HepG2 (cell line): ENCODE measurements at regions of chr16 and their contacts with region 1.

Region 1: GRCh38 chr16:52547004-52547833 is at the start of gene TOX3:
- DNase-seq: no peak
- ATAC-seq: peak; percentile 34
- H3K4me3 ChIP-seq: peak within 1 kb of the TSS; percentile 91 to 96 (median 92)
- H3K27ac ChIP-seq: peak within 1 kb of the TSS; percentile 67
- H3K4me1 ChIP-seq: peaks cover 32% of the 10 kb centered on the region
- H3K27me3 ChIP-seq: no peaks in the 10 kb centered on the region; a peak in 1 of 5 replicates
- CTCF ChIP-seq: no peak
- EP300 ChIP-seq: 0 out of 4 replicates have a peak, but pooled peaks of 1 of the 2 experiments have one; percentile 9
- POLR2A ChIP-seq: peak in 1 of 2 experiments; percentile 60; a peak in 1 of 4 replicates
- RAD21 ChIP-seq: no peak
- total RNA-seq, gene TOX3: 12.1 and 14.5 TPM in 2 replicates

Region 2: GRCh38 chr16:52191531-52192134 is 355.6 kb before region 1 on chr16:
- CTCF ChIA-PET with region 1: no interaction called
- POLR2A ChIA-PET with region 1: interaction called, 5 read pairs
- in situ Hi-C with region 1: loop called (anchors 10 kb)
- intact Hi-C with region 1: loop called (anchors 2 kb)
- DNase-seq: peak; percentile 76
- ATAC-seq: peak; percentile 74
- H3K4me3 ChIP-seq: no peak overlapping the region
- H3K27ac ChIP-seq: no peak overlapping the region
- H3K4me1 ChIP-seq: peaks cover 9% of the 10 kb centered on the region
- H3K27me3 ChIP-seq: no peaks in the 10 kb centered on the region
- CTCF ChIP-seq: peak; percentile 97
- EP300 ChIP-seq: no peak
- POLR2A ChIP-seq: no peak
- RAD21 ChIP-seq: peak; percentile 90

Region 3: GRCh38 chr16:52439171-52439701 is 108.0 kb before region 1 on chr16:
- CTCF ChIA-PET with region 1: no interaction called
- POLR2A ChIA-PET with region 1: no interaction called
- in situ Hi-C with region 1: no loop called
- intact Hi-C with region 1: loop called (anchors 5 kb)
- DNase-seq: no peak
- ATAC-seq: no peak; the same call in 2 of the 3 replicates
- H3K4me3 ChIP-seq: no peak overlapping the region
- H3K27ac ChIP-seq: no peak overlapping the region
- H3K4me1 ChIP-seq: peaks cover 10% of the 10 kb centered on the region
- H3K27me3 ChIP-seq: no peaks in the 10 kb centered on the region
- CTCF ChIP-seq: no peak
- EP300 ChIP-seq: no peak
- POLR2A ChIP-seq: no peak
- RAD21 ChIP-seq: no peak

Region 4: GRCh38 chr16:52497067-52497816 is 50.0 kb before region 1 on chr16:
- CTCF ChIA-PET with region 1: no interaction called
- POLR2A ChIA-PET with region 1: interaction called, 65 read pairs
- in situ Hi-C with region 1: loop called (anchors 5 kb)
- intact Hi-C with region 1: loop called (anchors 2 kb)
- DNase-seq: peak; percentile 71
- ATAC-seq: peak; percentile 67
- H3K4me3 ChIP-seq: peak overlapping the region in 2 of 3 experiments; percentile 43 to 47; a peak in 4 of 6 replicates
- H3K27ac ChIP-seq: peak overlapping the region; percentile 94
- H3K4me1 ChIP-seq: peaks cover 98% of the 10 kb centered on the region
- H3K27me3 ChIP-seq: no peaks in the 10 kb centered on the region
- CTCF ChIP-seq: no peak
- EP300 ChIP-seq: peak in 1 of 2 experiments; percentile 55; a peak in 2 of 4 replicates
- POLR2A ChIP-seq: no peak
- RAD21 ChIP-seq: no peak

Region 5: DNA sequence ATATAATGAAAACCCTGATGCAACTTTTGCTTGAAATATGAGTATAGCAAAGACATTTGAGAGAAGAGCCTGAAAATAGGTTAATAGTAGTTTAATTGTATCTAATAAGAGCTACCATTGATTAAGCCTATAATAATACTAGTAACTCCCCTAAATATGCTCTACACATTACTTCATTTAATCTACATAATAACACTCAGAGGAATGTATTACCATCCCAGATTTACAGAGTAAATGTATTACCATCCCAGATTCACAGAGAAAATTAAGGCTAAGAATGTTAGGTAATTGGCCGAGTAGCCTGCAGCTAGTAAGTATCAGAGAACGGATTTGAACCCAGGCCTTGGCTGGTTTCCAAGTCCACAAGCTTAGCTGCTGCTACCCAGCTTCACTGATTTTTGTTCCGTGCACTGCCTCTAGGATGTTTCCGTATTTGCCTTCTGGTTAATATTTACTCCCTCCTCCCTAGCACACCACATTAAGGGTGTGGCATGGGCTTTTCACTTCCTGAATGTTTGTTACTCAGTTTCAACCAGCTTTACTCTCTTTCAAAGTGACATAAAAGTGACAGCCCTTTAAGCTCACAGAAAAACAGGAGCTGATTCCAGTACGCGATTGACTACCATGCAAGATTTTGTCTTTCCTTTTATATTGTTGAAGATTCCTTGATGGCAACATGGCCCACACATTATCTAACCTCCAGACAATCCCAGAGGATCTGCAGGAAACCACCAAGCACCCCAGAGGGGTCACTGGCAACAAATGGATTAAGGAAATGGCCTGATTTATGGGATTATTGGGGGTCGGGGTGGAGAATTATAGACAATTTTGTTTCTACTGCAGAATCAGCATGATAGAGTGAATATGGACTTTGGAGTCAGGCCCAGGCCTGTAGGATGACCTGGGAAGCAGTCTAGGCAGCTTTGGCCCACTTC is 26.4 kb after region 1 on chr16:
- CTCF ChIA-PET with region 1: no interaction called
- POLR2A ChIA-PET with region 1: interaction called, 57 read pairs
- in situ Hi-C with region 1: no loop called
- intact Hi-C with region 1: loop called (anchors 2 kb)
- DNase-seq: peak; percentile 95
- ATAC-seq: peak; percentile 95
- H3K4me3 ChIP-seq: peak overlapping the region in 2 of 3 experiments; percentile 11 to 36; a peak in 4 of 6 replicates
- H3K27ac ChIP-seq: peak overlapping the region; percentile 71
- H3K4me1 ChIP-seq: peaks cover 100% of the 10 kb centered on the region
- H3K27me3 ChIP-seq: no peaks in the 10 kb centered on the region
- CTCF ChIP-seq: no peak
- EP300 ChIP-seq: peak in 1 of 2 experiments; percentile 92; a peak in 2 of 4 replicates
- POLR2A ChIP-seq: peak in 1 of 2 experiments; percentile 48; a peak in 1 of 4 replicates
- RAD21 ChIP-seq: no peak

Region 6: DNA sequence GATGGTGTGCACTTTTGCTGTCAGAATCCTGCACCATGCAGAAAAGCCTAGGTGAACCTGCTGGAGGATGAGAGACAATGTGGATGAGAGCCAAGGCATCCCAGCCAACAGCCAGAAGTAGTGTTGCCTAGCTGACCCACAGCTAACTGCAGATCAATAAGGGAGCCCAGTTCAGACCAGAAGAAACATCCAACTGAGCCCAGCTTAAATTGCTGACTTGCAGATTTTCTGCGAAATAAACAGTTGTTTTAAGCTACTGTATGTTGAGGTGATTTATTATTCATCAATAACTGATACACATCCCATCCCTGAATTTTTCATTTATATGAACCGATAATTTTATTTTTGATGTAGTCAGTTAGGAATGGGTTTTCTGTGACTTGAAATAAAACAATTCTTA is 38.9 kb after region 1 on chr16:
- CTCF ChIA-PET with region 1: no interaction called
- POLR2A ChIA-PET with region 1: no interaction called
- in situ Hi-C with region 1: no loop called
- intact Hi-C with region 1: no loop called
- DNase-seq: no peak
- ATAC-seq: no peak
- H3K4me3 ChIP-seq: no peak overlapping the region
- H3K27ac ChIP-seq: no peak overlapping the region
- H3K4me1 ChIP-seq: peaks cover 14% of the 10 kb centered on the region
- H3K27me3 ChIP-seq: peaks cover 0 to 7% of the 10 kb centered on the region in 2 experiments; a peak in 1 of 5 replicates
- CTCF ChIP-seq: no peak
- EP300 ChIP-seq: no peak
- POLR2A ChIP-seq: no peak
- RAD21 ChIP-seq: no peak

Region 7: GRCh38 chr16:52597580-52598483 is 50.6 kb after region 1 on chr16:
- CTCF ChIA-PET with region 1: no interaction called
- POLR2A ChIA-PET with region 1: no interaction called
- in situ Hi-C with region 1: no loop called
- intact Hi-C with region 1: loop called (anchors 2 kb)
- DNase-seq: peak; percentile 99
- ATAC-seq: peak; percentile 100
- H3K4me3 ChIP-seq: peak overlapping the region in 1 of 3 experiments; percentile 23; a peak in 1 of 6 replicates
- H3K27ac ChIP-seq: peak overlapping the region; percentile 42
- H3K4me1 ChIP-seq: peaks cover 52% of the 10 kb centered on the region
- H3K27me3 ChIP-seq: no peaks in the 10 kb centered on the region
- CTCF ChIP-seq: no peak
- EP300 ChIP-seq: peak in 1 of 2 experiments; percentile 81; a peak in 2 of 4 replicates
- POLR2A ChIP-seq: no peak
- RAD21 ChIP-seq: no peak

Region 8: GRCh38 chr16:52671590-52671989 is 124.4 kb after region 1 on chr16:
- CTCF ChIA-PET with region 1: no interaction called
- POLR2A ChIA-PET with region 1: no interaction called
- in situ Hi-C with region 1: no loop called
- intact Hi-C with region 1: no loop called
- DNase-seq: no peak
- ATAC-seq: no peak
- H3K4me3 ChIP-seq: no peak overlapping the region
- H3K27ac ChIP-seq: no peak overlapping the region
- H3K4me1 ChIP-seq: no peaks in the 10 kb centered on the region
- H3K27me3 ChIP-seq: no peaks in the 10 kb centered on the region
- CTCF ChIP-seq: no peak
- EP300 ChIP-seq: no peak
- POLR2A ChIP-seq: no peak
- RAD21 ChIP-seq: no peak

Region 9: GRCh38 chr16:52861614-52862022 is 314.4 kb after region 1 on chr16:
- CTCF ChIA-PET with region 1: no interaction called
- POLR2A ChIA-PET with region 1: no interaction called
- in situ Hi-C with region 1: no loop called
- intact Hi-C with region 1: loop called (anchors 1 kb)
- DNase-seq: peak; percentile 65
- ATAC-seq: peak; percentile 78
- H3K4me3 ChIP-seq: no peak overlapping the region
- H3K27ac ChIP-seq: no peak overlapping the region
- H3K4me1 ChIP-seq: peaks cover 12% of the 10 kb centered on the region
- H3K27me3 ChIP-seq: peaks cover 0 to 5% of the 10 kb centered on the region in 2 experiments; a peak in 1 of 5 replicates
- CTCF ChIP-seq: peak; percentile 89
- EP300 ChIP-seq: 0 out of 4 replicates have a peak, but pooled peaks of 1 of the 2 experiments have one; percentile 19
- POLR2A ChIP-seq: no peak
- RAD21 ChIP-seq: peak; percentile 91